AG04449 (cell line): ENCODE measurements at regions of chr7 and their contacts with region 1.

Region 1: DNA sequence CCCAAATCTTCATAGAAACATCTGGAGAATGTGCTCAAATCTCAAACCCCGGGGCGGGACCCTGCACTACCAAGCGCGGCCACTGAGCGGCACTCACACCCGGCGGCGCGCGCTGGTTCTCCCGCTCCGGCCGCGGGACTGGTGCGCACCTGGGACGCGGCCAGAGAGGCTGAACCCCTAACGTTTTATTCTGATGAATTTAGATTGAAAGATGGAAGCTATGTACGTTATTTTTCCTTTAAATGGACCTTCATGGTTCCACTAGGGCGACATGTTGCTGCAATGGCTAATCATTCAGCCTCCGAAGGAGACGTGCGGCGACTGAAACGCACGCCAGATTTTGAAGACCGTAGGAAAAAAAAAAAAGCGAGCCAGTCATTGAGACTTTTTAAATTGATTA is 107.0 kb upstream of the INSIG1 start:
- DNase-seq: no peak
- H3K4me3 ChIP-seq: peak overlapping the region; percentile 43
- CTCF ChIP-seq: peak; percentile 94

Region 2: DNA sequence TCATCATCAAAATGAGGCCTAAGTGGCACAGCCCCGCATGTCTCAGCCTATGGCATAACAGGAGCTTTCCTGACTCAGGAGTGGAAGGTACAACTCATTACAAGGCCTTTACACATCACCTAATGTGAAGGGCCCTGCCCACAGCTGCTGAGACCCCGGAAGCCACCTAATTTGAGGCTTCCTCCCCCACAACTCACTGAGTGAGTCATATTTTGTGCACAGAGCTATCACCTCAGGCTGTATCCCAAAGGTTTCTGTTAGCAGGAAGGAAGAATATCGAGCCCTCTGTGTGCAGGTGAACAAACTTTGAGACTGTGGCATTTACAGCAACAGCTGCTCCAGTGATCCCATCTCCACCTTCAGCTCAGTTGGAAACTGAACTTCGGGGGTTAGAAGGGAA is 100.0 kb before region 1 on chr7:
- CTCF ChIA-PET with region 1: no interaction called
- POLR2A ChIA-PET with region 1: no interaction called
- DNase-seq: no peak
- H3K4me3 ChIP-seq: no peak overlapping the region
- CTCF ChIP-seq: no peak

Region 3: GRCh38 chr7:155141562-155141961 is 49.1 kb before region 1 on chr7:
- CTCF ChIA-PET with region 1: no interaction called
- POLR2A ChIA-PET with region 1: no interaction called
- DNase-seq: no peak
- H3K4me3 ChIP-seq: no peak overlapping the region
- CTCF ChIP-seq: no peak

Region 4: GRCh38 chr7:155205368-155206317 is 15.0 kb after region 1 on chr7:
- CTCF ChIA-PET with region 1: interaction called, 48 read pairs
- POLR2A ChIA-PET with region 1: no interaction called
- DNase-seq: peak; percentile 99
- H3K4me3 ChIP-seq: peak overlapping the region; percentile 25
- CTCF ChIP-seq: no peak

Region 5: DNA sequence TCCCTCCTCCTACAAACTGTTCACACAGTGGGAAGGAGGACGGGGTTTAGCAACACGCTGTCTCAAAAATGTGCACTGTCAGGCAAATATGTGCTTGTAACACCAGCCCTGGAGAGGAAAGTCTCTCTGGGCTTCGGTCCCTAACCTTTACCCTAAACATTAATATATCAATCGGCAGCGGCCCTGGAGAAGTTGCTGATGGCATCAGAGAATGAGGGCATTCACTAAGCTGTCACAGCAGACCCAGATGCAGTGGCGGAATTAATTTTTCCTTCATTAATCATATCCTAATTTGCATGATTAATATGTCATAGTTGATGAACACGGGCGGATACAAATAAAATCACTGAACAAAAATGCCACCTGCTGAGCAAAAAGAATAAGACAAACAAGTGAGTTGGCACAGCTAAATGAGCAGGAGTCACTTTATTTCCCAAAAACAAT is 61.8 kb after region 1 on chr7:
- CTCF ChIA-PET with region 1: no interaction called
- POLR2A ChIA-PET with region 1: no interaction called
- DNase-seq: no peak
- H3K4me3 ChIP-seq: no peak overlapping the region
- CTCF ChIP-seq: no peak

Region 6: GRCh38 chr7:155293721-155294510 is 103.2 kb after region 1 on chr7:
- CTCF ChIA-PET with region 1: interaction called, 45 read pairs
- POLR2A ChIA-PET with region 1: interaction called, 3 read pairs
- DNase-seq: no peak
- H3K4me3 ChIP-seq: no peak overlapping the region
- CTCF ChIP-seq: no peak

Region 7: GRCh38 chr7:155298834-155299534 is 108.3 kb after region 1 on chr7:
- CTCF ChIA-PET with region 1: interaction called, 45 read pairs
- POLR2A ChIA-PET with region 1: interaction called, 3 read pairs
- DNase-seq: peak; percentile 72
- H3K4me3 ChIP-seq: peak overlapping the region; percentile 73
- CTCF ChIP-seq: no peak

Region 8: GRCh38 chr7:155306673-155307470 is 116.2 kb after region 1 on chr7:
- CTCF ChIA-PET with region 1: interaction called, 32 read pairs
- POLR2A ChIA-PET with region 1: no interaction called
- DNase-seq: no peak
- H3K4me3 ChIP-seq: no peak overlapping the region
- CTCF ChIP-seq: no peak